ENCODE measurements at regions of chr1 and their contacts with region 1.

Region 1: DNA sequence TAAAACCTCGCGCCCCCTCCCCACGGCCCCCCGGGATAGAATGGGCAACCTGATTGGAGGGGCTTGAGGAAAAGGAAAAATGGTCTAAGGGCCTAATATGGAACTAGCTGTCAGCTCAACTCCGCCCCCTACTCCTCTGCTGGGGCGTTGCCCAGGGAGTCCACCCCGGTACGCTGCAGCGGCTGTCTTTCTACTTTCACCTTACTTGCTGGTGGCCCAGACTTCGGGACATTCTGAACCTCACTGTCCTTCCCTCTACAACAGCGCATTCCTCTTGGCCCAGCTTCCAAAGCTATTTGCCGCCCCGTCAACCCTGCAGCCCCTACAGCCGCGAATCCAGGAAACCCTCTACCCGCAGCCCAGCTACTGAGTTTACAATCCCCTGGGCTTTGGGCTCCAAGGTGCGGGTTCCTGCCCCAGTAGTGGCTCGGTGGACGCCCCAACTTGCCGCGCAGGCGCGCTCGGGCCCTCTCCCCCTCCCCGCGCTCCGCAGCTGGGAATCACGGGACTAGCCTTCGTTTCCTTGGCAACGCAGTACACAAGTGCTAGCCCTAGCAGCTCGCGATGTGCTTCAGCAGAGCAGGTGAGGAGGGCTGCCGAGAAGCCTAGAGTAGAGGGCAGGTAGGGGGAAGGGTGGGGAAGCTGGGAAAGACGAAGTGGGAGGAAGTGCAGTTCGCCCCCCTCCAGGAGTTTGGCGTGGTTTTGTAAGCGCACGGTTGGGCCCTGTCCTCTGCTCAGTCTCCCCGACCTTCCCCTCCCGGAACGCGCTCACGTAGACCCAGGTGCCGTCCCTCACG is 55.6 kb downstream of the CHIA start:
- DNase-seq: peak; percentile 98
- ATAC-seq: peak; percentile 85
- H3K4me3 ChIP-seq: peak overlapping the region; percentile 9 to 75 (median 66)
- H3K4me3 Mint-ChIP-seq: peak overlapping the region; percentile 97
- H3K27ac ChIP-seq: peak overlapping the region; percentile 71 to 78
- H3K27ac Mint-ChIP-seq: peak overlapping the region; percentile 95
- H3K4me1 ChIP-seq: peaks cover 9 to 16% of the 10 kb centered on the region in 2 donors
- H3K4me1 Mint-ChIP-seq: peaks cover 16% of the 10 kb centered on the region
- H3K27me3 ChIP-seq: no peaks in the 10 kb centered on the region
- H3K27me3 Mint-ChIP-seq: no peaks in the 10 kb centered on the region
- CTCF ChIP-seq: no peak

Region 2: GRCh38 chr1:111203681-111204200 is 142.5 kb before region 1 on chr1:
- CTCF ChIA-PET with region 1: no interaction called
- POLR2A ChIA-PET with region 1: interaction called, 3 read pairs
- intact Hi-C with region 1: loop called (anchors 2 kb)
- DNase-seq: peak; percentile 90
- ATAC-seq: peak; percentile 56
- H3K4me3 ChIP-seq: peak overlapping the region; percentile 60 to 87 (median 83)
- H3K4me3 Mint-ChIP-seq: peak overlapping the region; percentile 91
- H3K27ac ChIP-seq: peak overlapping the region; percentile 88 to 96
- H3K27ac Mint-ChIP-seq: peak overlapping the region; percentile 96
- H3K4me1 ChIP-seq: peaks cover 58 to 75% of the 10 kb centered on the region in 2 donors
- H3K4me1 Mint-ChIP-seq: peaks cover 81% of the 10 kb centered on the region
- H3K27me3 ChIP-seq: no peaks in the 10 kb centered on the region
- H3K27me3 Mint-ChIP-seq: no peaks in the 10 kb centered on the region
- CTCF ChIP-seq: no peak

Region 3: GRCh38 chr1:111214074-111214801 is 132.0 kb before region 1 on chr1:
- CTCF ChIA-PET with region 1: interaction called, 7 read pairs
- POLR2A ChIA-PET with region 1: interaction called, 9 read pairs
- intact Hi-C with region 1: loop called (anchors 1 kb)
- DNase-seq: peak; percentile 61
- ATAC-seq: no peak
- H3K4me3 ChIP-seq: peak overlapping the region in 1 of 5 experiments; percentile 42
- H3K4me3 Mint-ChIP-seq: peak overlapping the region; percentile 59
- H3K27ac ChIP-seq: peak overlapping the region; percentile 81 to 92
- H3K27ac Mint-ChIP-seq: peak overlapping the region; percentile 95
- H3K4me1 ChIP-seq: peaks cover 67 to 75% of the 10 kb centered on the region in 2 donors
- H3K4me1 Mint-ChIP-seq: peaks cover 78% of the 10 kb centered on the region
- H3K27me3 ChIP-seq: no peaks in the 10 kb centered on the region
- H3K27me3 Mint-ChIP-seq: no peaks in the 10 kb centered on the region
- CTCF ChIP-seq: no peak

Region 4: GRCh38 chr1:111334169-111334568 is 12.1 kb before region 1 on chr1:
- CTCF ChIA-PET with region 1: interaction called, 14 read pairs
- POLR2A ChIA-PET with region 1: no interaction called
- intact Hi-C with region 1: no loop called
- DNase-seq: peak; percentile 72
- ATAC-seq: peak; percentile 62
- H3K4me3 ChIP-seq: no peak overlapping the region
- H3K4me3 Mint-ChIP-seq: no peak overlapping the region
- H3K27ac ChIP-seq: no peak overlapping the region
- H3K27ac Mint-ChIP-seq: no peak overlapping the region
- H3K4me1 ChIP-seq: peaks cover 0 to 6% of the 10 kb centered on the region in 2 donors
- H3K4me1 Mint-ChIP-seq: no peaks in the 10 kb centered on the region
- H3K27me3 ChIP-seq: no peaks in the 10 kb centered on the region
- H3K27me3 Mint-ChIP-seq: no peaks in the 10 kb centered on the region
- CTCF ChIP-seq: peak; percentile 74

Region 5: GRCh38 chr1:111406321-111406768 is 60.1 kb after region 1 on chr1:
- CTCF ChIA-PET with region 1: no interaction called
- POLR2A ChIA-PET with region 1: no interaction called
- intact Hi-C with region 1: loop called (anchors 2 kb)
- DNase-seq: peak; percentile 83
- ATAC-seq: peak; percentile 96
- H3K4me3 ChIP-seq: no peak overlapping the region
- H3K4me3 Mint-ChIP-seq: peak overlapping the region; percentile 59
- H3K27ac ChIP-seq: peak overlapping the region; percentile 32 to 37
- H3K27ac Mint-ChIP-seq: peak overlapping the region; percentile 79
- H3K4me1 ChIP-seq: peaks cover 30 to 35% of the 10 kb centered on the region in 2 donors
- H3K4me1 Mint-ChIP-seq: peaks cover 37% of the 10 kb centered on the region
- H3K27me3 ChIP-seq: no peaks in the 10 kb centered on the region
- H3K27me3 Mint-ChIP-seq: no peaks in the 10 kb centered on the region
- CTCF ChIP-seq: no peak

Region 6: DNA sequence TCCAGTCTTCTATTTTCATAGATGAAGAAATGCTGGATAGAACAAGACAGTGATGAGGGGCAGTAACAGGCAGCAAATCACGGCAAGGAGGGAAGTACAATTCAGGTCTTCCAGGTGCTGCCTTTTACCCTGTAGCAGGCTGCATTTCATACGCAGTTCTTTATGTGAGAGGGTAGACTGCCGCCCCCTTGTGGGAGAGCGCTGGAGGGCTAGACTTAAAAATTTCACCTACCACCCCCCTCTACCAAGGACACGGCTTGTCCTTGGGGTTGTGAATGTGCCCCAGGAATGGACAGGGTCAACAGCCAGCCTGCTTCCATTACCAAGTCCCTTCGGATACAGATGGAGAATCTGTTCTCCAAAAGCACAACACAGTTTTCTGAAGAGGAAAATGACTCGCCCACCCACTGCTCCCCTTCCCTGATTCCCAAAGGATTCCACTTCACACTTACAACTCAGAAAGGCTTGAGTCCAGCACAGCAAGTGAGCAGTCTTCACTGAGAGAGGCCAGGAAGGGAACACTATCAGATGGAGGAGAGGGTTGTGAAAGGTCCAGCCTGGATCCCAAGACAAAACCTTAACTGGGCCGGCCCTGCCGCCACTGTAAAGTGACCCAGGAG is 95.4 kb after region 1 on chr1:
- CTCF ChIA-PET with region 1: interaction called, 4 read pairs
- POLR2A ChIA-PET with region 1: no interaction called
- intact Hi-C with region 1: loop called (anchors 2 kb)
- DNase-seq: peak; percentile 79
- ATAC-seq: peak; percentile 92
- H3K4me3 ChIP-seq: no peak overlapping the region
- H3K4me3 Mint-ChIP-seq: no peak overlapping the region
- H3K27ac ChIP-seq: peak overlapping the region in 1 of 2 donors; percentile 39
- H3K27ac Mint-ChIP-seq: peak overlapping the region; percentile 27
- H3K4me1 ChIP-seq: peaks cover 0 to 4% of the 10 kb centered on the region in 2 donors
- H3K4me1 Mint-ChIP-seq: peaks cover 16% of the 10 kb centered on the region
- H3K27me3 ChIP-seq: no peaks in the 10 kb centered on the region
- H3K27me3 Mint-ChIP-seq: no peaks in the 10 kb centered on the region
- CTCF ChIP-seq: peak; percentile 84